Activated CD4-positive, alpha-beta T cell treated with anti-CD3 and anti-CD28 coated beads, Interleukin-2, amount 10 ng/mL, durations not matched to agents 24 days and 14 days (primary cell): ENCODE measurements at regions of chr1 and their contacts with region 1.

Region 1: DNA sequence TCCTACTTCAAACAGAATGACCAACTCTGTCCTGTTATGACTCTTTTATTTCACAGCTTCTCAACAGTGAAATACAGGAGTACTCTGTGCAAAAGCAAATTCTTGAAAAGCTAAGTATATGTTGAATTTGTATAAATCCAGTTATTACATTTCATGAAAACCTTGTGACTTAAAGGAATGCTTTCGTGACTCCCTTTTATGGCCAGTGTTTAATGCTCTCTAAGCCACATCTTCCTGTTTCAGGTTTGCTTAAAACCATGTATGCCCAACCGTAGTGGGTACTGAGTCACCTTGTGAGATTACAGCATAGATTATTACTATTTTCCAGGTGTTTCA is 40.2 kb upstream of the KIF1B start:
- DNase-seq: peak; percentile 77
- H3K4me3 Mint-ChIP-seq: peak overlapping the region; percentile 67
- H3K27ac Mint-ChIP-seq: peak overlapping the region; percentile 85
- H3K4me1 Mint-ChIP-seq: peaks cover 45% of the 10 kb centered on the region
- H3K27me3 Mint-ChIP-seq: no peaks in the 10 kb centered on the region

Region 2: GRCh38 chr1:10074059-10074851 is 96.0 kb before region 1 on chr1:
- intact Hi-C with region 1: loop called (anchors 1 kb)
- DNase-seq: peak; percentile 82
- H3K4me3 Mint-ChIP-seq: peak overlapping the region; percentile 16
- H3K27ac Mint-ChIP-seq: peak overlapping the region; percentile 23
- H3K4me1 Mint-ChIP-seq: peaks cover 13% of the 10 kb centered on the region
- H3K27me3 Mint-ChIP-seq: no peaks in the 10 kb centered on the region

Region 3: GRCh38 chr1:10283318-10283984 is 113.2 kb after region 1 on chr1:
- intact Hi-C with region 1: loop called (anchors 1 kb)
- DNase-seq: peak; percentile 72
- H3K4me3 Mint-ChIP-seq: no peak overlapping the region
- H3K27ac Mint-ChIP-seq: peak overlapping the region; percentile 17
- H3K4me1 Mint-ChIP-seq: peaks cover 20% of the 10 kb centered on the region
- H3K27me3 Mint-ChIP-seq: no peaks in the 10 kb centered on the region

Region 4: GRCh38 chr1:11012250-11013171 is 842.3 kb after region 1 on chr1 and contains the start of gene TARDBP:
- intact Hi-C with region 1: loop called (anchors 5 kb)
- DNase-seq: peak; percentile 97
- H3K4me3 Mint-ChIP-seq: peak within 1 kb of the TSS; percentile 88
- H3K27ac Mint-ChIP-seq: peak within 1 kb of the TSS; percentile 98
- H3K4me1 Mint-ChIP-seq: peaks cover 18% of the 10 kb centered on the region
- H3K27me3 Mint-ChIP-seq: no peaks in the 10 kb centered on the region
- total RNA-seq, gene TARDBP: 211 and 224 TPM in 2 replicates